ENCODE measurements at regions of chr4 and their contacts with region 1.

Region 1: DNA sequence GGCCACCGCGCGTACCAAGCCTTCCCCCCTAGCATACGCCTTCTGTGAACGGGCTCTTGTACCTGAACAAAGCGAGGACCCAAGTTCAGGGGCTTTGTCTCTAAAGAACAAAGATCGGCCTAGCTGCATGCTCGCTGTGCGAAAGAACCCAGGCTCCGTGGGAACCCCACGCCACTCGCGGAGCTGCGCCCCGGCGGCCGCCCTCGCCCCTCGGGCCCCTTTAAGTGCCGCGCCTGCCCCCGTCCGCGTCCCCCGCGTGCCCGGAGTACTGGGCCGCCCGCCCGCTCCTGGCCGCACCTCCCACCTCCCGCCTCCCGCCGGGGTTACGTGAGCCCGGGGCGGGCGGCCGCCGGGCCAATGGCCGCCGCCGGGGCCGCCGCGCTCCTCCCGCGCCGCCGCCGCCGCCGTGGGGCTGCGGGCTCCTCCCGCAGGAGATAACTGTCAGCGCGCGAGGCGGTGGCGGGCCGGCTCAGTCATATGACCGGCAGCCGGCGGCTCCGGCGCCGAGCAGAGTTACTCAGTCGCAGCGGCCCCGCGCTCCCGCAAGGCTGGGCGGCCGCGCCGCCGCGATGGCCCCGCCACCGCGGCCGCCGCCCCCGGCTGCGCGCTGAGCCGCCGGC is at the start of gene FNIP2:
- DNase-seq: peak; percentile 76
- H3K4me3 Mint-ChIP-seq: peak within 1 kb of the TSS; percentile 100
- H3K27ac Mint-ChIP-seq: peak within 1 kb of the TSS; percentile 98
- H3K4me1 Mint-ChIP-seq: peaks cover 54% of the 10 kb centered on the region
- H3K27me3 Mint-ChIP-seq: peaks cover 2% of the 10 kb centered on the region
- total RNA-seq, gene FNIP2: 18.8 and 20.4 TPM in 2 replicates

Region 2: GRCh38 chr4:158428242-158428641 is 340.4 kb before region 1 on chr4:
- intact Hi-C with region 1: no loop called
- DNase-seq: no peak
- H3K4me3 Mint-ChIP-seq: no peak overlapping the region
- H3K27ac Mint-ChIP-seq: no peak overlapping the region
- H3K4me1 Mint-ChIP-seq: no peaks in the 10 kb centered on the region
- H3K27me3 Mint-ChIP-seq: no peaks in the 10 kb centered on the region

Region 3: GRCh38 chr4:158530381-158530780 is 238.3 kb before region 1 on chr4:
- intact Hi-C with region 1: no loop called
- DNase-seq: no peak
- H3K4me3 Mint-ChIP-seq: no peak overlapping the region
- H3K27ac Mint-ChIP-seq: no peak overlapping the region
- H3K4me1 Mint-ChIP-seq: peaks cover 5% of the 10 kb centered on the region
- H3K27me3 Mint-ChIP-seq: peaks cover 6% of the 10 kb centered on the region

Region 4: GRCh38 chr4:158590306-158590705 is 178.4 kb before region 1 on chr4:
- intact Hi-C with region 1: no loop called
- DNase-seq: no peak
- H3K4me3 Mint-ChIP-seq: no peak overlapping the region
- H3K27ac Mint-ChIP-seq: no peak overlapping the region
- H3K4me1 Mint-ChIP-seq: no peaks in the 10 kb centered on the region
- H3K27me3 Mint-ChIP-seq: peaks cover 8% of the 10 kb centered on the region

Region 5: DNA sequence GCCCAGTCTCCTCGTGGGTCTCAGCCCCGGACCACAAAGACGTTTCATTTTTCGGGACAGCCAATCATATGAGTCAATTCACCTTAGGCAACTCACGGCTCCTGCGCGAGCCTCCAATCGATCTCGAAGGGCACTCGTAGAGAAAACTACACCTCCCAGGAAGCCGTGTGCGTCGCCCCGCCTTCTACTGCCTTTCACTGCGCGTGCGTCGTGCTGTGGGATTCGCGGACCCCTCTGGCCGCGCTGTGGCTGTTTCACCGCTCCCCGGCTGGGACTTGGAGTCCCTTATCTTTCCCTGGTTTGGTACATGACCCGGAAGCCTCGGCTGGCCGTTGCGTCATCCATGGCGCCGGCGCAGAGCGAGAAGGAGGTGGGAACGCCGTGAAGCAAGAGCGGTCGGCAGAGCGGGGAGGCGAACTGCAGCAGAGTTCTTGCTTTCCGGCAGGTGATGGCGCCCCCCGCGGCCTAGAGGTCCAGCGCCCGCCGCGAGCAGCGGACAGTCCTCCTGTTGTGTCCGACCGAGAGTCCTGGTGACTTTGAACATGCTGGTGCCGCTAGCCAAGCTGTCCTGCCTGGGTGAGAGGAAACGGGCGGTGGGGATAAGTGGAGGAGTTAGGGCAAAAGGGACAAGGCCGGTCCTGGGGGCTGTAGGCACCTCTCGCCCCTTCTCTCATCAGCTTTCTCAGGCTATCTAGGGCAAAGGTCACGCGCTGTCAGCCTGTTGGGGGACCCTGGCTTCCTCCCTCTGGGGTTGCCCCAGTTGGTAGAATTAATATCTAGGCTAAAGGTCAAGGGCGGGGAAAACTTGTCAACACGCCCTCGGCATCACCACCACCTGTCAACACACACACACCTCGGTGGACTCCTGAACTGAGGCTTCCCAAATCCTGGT is 96.5 kb before region 1 on chr4 and contains the start of gene ETFDH:
- intact Hi-C with region 1: loop called (anchors 1 kb)
- DNase-seq: peak; percentile 98
- H3K4me3 Mint-ChIP-seq: peak within 1 kb of the TSS; percentile 99
- H3K27ac Mint-ChIP-seq: peak within 1 kb of the TSS; percentile 96
- H3K4me1 Mint-ChIP-seq: peaks cover 46% of the 10 kb centered on the region
- H3K27me3 Mint-ChIP-seq: peaks cover 2% of the 10 kb centered on the region
- total RNA-seq, gene ETFDH: 19.9 and 21.5 TPM in 2 replicates

Region 6: DNA sequence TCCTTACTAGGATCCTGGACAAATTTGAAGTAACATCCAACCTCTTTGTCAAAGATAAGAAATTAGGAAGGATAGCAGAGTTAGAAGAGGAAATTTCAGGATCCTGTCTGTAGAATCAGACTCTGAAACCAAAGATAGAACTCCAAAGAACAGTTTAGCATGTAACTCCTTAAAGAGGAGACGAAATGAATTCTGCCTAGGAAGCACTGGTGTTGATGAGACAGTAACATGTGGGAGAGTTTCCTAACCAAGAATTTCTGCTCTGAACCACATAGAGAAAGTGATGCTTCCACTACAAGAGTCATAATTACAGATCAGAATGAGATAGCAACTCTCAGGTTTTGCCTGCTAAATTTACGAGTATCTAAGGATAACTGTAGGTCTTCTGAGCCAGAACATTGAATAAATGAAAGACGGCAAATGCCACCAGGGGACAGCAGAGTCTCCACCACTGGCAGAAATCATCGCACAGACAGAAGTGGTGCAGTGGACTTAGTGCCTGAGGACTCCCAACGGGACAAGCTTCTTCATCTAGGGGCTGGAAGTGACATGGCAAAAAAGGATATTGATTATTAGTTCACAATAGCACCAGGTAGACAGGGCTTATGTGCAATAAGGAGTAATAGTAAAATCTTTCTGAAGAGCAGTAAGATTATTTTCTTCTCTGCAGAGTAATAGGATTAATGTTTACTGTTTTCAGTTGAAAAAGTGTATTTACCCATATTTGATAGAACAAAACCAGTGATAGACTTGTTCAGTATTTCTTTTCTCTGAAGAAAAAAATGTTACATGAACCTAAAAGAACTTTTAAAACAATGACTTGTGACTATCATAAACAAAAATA is 38.7 kb before region 1 on chr4:
- intact Hi-C with region 1: loop called (anchors 1 kb)
- DNase-seq: peak; percentile 32
- H3K4me3 Mint-ChIP-seq: no peak overlapping the region
- H3K27ac Mint-ChIP-seq: no peak overlapping the region
- H3K4me1 Mint-ChIP-seq: peaks cover 33% of the 10 kb centered on the region
- H3K27me3 Mint-ChIP-seq: peaks cover 18% of the 10 kb centered on the region

Region 7: DNA sequence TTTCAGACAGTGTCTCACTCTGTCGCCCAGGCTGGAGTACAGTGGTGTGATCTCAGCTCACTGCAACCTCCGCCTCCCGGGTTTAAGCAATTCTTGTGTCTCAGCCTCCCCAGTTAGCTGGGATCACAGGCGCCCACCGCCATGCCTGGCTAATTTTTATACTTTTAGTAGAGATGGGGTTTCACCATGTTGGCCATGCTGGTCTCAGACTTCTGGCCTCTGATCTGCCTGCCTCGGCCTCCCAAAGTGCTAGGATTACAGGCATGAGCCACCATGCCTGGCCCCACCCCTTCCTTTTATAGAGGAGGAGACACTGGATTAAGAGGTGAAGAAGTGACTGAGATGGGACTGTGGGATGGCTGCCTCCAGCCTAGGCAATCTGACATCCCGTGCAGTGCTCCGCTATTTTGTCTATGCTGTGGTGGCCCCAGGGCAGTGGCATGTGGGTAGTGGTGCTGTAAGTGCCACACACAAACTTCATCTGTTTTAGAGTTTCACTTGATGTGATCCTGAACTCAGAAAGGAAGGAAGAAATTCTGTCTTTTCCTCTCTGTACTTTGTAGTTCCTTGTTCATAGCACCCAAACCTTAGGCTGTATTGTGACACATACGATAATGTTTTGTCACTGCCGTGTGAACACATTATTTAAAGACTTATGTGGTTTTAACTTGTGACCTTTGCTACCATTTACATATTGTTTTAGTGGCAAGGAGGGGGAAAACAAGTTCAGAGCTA is 49.1 kb after region 1 on chr4:
- intact Hi-C with region 1: loop called (anchors 1 kb)
- DNase-seq: no peak
- H3K4me3 Mint-ChIP-seq: no peak overlapping the region
- H3K27ac Mint-ChIP-seq: peak overlapping the region; percentile 69
- H3K4me1 Mint-ChIP-seq: peaks cover 61% of the 10 kb centered on the region
- H3K27me3 Mint-ChIP-seq: no peaks in the 10 kb centered on the region

Region 8: GRCh38 chr4:159077702-159078495 is 309.2 kb after region 1 on chr4:
- intact Hi-C with region 1: loop called (anchors 5 kb)
- DNase-seq: no peak
- H3K4me3 Mint-ChIP-seq: peak overlapping the region; percentile 53
- H3K27ac Mint-ChIP-seq: peak overlapping the region; percentile 22
- H3K4me1 Mint-ChIP-seq: peaks cover 24% of the 10 kb centered on the region
- H3K27me3 Mint-ChIP-seq: peaks cover 2% of the 10 kb centered on the region

Measured in activated T-helper 1 cell treated with anti-CD3 and anti-CD28 coated beads, Interleukin-12 subunit alpha, Interleukin-12 subunit beta, Interleukin-2, Interleukin-4 antibody, amounts not matched to agents 30 ng/mL and 10 ng/mL and 1 ng/mL, durations not matched to agents 14 hours and 24 hours and 36 hours (primary cell).